Left ventricle myocardium inferior (tissue), 1 donor: ENCODE measurements at regions of chr12 and their contacts with region 1.

Region 1: DNA sequence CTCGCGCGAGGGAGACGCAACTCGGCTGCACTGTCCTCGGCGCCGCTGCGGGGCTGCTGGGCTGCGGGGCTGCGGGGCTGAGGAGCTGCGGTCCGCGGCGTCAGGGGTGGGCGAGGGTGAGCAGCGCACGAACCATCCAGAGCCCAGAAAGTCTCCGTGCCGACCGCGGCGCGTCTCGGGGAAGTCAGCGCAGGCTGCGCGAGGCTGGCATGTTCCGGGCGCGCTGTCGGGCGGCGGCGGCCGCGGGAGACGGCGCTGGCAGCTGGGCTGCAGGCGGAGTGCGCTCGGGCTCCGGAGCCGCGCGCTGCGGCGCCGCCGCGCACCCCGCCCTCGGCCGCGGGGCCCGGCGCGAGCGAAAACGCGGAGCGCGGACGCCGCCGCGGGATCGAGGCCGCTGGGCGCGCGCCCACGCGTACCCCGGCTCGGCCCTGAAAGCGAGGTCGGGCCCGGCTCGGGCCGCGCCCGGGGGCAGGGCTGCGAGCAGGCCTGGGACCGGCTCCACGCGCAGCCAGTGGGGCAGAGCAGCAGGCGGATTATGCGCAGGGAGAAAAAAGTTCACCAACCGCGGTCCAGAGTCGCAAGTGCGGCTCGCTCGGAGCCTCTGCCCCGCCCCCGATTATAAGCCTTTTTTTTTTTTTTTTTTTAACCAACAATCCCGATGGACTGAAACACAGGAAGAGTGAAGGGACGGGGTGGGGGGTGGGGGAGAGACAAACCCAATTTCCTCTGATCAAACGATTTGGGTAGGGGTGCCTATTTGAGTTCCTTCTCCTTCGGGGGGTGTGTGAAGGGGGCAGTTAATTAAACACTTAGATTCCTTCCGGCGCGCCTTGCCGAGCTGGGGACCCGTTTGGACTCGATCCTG is at the start of gene PRICKLE1:
- DNase-seq: peak; percentile 40
- H3K4me3 ChIP-seq: peak within 1 kb of the TSS; percentile 99
- H3K27ac ChIP-seq: peak within 1 kb of the TSS; percentile 85
- H3K4me1 ChIP-seq: peaks cover 58% of the 10 kb centered on the region
- H3K27me3 ChIP-seq: no peaks in the 10 kb centered on the region
- CTCF ChIP-seq: no peak
- total RNA-seq, gene PRICKLE1: 20.9 TPM

Region 2: GRCh38 chr12:42789808-42790760 is 200.4 kb after region 1 on chr12:
- intact Hi-C with region 1: loop called (anchors 10 kb)
- DNase-seq: no peak
- H3K4me3 ChIP-seq: no peak overlapping the region
- H3K27ac ChIP-seq: peak overlapping the region; percentile 4
- H3K4me1 ChIP-seq: peaks cover 14% of the 10 kb centered on the region
- H3K27me3 ChIP-seq: no peaks in the 10 kb centered on the region
- CTCF ChIP-seq: no peak

Region 3: DNA sequence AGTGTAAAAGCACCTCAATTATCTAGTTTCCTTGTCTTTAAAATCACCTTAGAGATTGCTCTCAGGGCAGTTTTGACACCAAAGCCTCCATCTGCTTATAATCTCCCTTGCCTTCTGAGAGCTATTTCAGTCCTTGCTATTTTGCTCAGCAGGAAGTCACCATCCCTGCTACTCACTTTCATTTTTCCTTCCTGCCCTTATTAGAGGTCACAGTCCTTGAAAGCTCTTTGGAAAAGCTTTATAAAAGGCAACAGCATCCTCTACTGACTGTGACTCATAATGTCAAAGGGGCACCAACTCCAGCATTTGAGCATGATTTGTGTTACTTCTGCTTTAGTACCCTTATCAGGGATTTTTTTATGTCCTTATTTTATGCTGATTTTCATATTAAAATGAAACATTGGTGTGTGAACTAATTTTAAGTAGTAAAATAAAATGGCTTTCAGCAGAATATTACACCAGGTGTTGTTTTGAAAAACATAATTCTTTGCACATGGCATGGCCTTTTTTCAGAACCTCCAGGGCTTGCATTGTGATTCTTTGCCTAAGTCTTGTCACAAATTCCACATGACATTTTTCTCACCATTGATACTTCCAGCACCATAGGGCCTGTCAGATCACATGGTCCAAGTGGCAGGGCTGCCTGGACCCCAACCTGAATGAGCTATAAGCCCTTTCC is 749.3 kb after region 1 on chr12:
- intact Hi-C with region 1: loop called (anchors 10 kb)
- DNase-seq: no peak
- H3K4me3 ChIP-seq: no peak overlapping the region
- H3K27ac ChIP-seq: peak overlapping the region; percentile 56
- H3K4me1 ChIP-seq: peaks cover 16% of the 10 kb centered on the region
- H3K27me3 ChIP-seq: no peaks in the 10 kb centered on the region
- CTCF ChIP-seq: peak; percentile 73